ENCODE measurements at regions of chr6 and their contacts with region 1.

Region 1: DNA sequence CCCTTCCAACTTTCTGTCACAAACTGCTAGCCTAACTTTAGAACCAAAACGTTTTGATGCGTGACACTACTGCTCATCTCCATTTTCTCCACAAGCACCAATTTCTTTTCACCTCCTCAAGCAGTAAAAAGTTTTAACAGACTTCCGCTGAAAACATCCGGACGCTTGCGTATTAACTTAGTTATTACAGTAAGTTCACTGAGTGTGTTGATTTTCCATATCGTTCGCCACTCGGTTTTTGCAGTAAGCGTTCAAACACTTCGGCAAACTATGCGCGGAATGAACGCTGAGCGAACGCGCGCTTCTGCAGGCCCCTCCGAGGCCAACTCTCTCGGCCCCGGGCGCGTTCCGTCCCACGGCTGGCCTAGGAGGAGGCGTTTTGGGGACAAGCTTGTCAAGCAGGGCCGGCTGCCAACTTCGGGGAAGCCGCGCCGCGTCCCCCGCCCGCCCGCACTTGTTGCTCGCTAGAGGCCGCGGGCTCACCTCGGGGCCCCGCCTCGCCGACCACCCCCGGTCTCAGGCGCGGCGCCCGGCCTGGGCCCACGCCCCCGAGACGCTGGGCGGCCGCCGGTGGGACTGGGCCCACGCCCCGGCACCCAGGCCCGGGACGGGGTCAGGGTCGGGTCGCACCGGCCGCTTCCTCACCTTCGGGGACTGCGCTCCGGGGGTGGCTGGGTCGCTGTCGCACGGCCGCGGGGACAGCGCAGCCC is 945 bp downstream of the PHF10 start:
- DNase-seq: peak; percentile 74 to 79 (median 76)
- H3K4me3 ChIP-seq: peak overlapping the region; percentile 76 to 90
- H3K4me3 Mint-ChIP-seq: peak overlapping the region; percentile 89 to 100 (median 96)
- H3K27ac ChIP-seq: peak overlapping the region; percentile 85
- H3K27ac Mint-ChIP-seq: peak overlapping the region; percentile 93 to 99 (median 96)
- H3K4me1 ChIP-seq: peaks cover 49% of the 10 kb centered on the region
- H3K4me1 Mint-ChIP-seq: peaks cover 28 to 55% (median 42%) of the 10 kb centered on the region in 4 donors
- H3K27me3 ChIP-seq: no peaks in the 10 kb centered on the region
- H3K27me3 Mint-ChIP-seq: no peaks in the 10 kb centered on the region

Region 2: DNA sequence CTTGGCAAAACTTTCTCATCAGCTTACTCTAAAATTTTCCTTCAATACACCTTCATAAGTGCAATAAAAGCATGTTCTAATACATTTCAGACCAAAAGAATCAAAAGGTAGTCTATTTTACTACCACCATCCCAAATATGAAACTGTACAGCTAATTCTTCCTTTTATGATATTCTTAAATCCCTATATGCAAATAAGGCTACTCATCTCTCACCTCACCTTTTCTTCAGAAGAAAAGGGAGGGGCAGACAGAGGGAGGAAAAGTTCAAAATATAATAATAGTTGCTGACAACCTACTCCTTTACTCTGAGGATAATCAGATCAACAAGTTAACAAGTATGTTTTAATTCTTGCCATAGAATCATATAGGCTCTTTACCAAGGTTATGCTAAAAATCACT is 14.1 kb before region 1 on chr6:
- CTCF ChIA-PET with region 1: interaction called, 9 read pairs
- POLR2A ChIA-PET with region 1: interaction called, 279 read pairs
- intact Hi-C with region 1: no loop called
- DNase-seq: no peak
- H3K4me3 ChIP-seq: no peak overlapping the region
- H3K4me3 Mint-ChIP-seq: no peak overlapping the region
- H3K27ac ChIP-seq: no peak overlapping the region
- H3K27ac Mint-ChIP-seq: peak overlapping the region in 1 of 7 donors; percentile 24
- H3K4me1 ChIP-seq: peaks cover 20% of the 10 kb centered on the region
- H3K4me1 Mint-ChIP-seq: peaks cover 19 to 37% (median 23%) of the 10 kb centered on the region in 4 donors
- H3K27me3 ChIP-seq: no peaks in the 10 kb centered on the region
- H3K27me3 Mint-ChIP-seq: no peaks in the 10 kb centered on the region

Region 3: GRCh38 chr6:169751242-169752073 is 28.1 kb after region 1 on chr6 and contains the starts of genes DYNLT2 and ERMARD:
- CTCF ChIA-PET with region 1: interaction called, 5 read pairs
- POLR2A ChIA-PET with region 1: interaction called, 100 read pairs
- intact Hi-C with region 1: loop called (anchors 1 kb)
- DNase-seq: peak; percentile 93 to 96 (median 94)
- H3K4me3 ChIP-seq: peak within 1 kb of the TSS; percentile 80 to 90
- H3K4me3 Mint-ChIP-seq: peak within 1 kb of the TSS; percentile 97 to 100 (median 99)
- H3K27ac ChIP-seq: peak within 1 kb of the TSS; percentile 93
- H3K27ac Mint-ChIP-seq: peak within 1 kb of the TSS; percentile 99 to 100 (median 100)
- H3K4me1 ChIP-seq: peaks cover 24% of the 10 kb centered on the region
- H3K4me1 Mint-ChIP-seq: peaks cover 18 to 39% (median 31%) of the 10 kb centered on the region in 4 donors
- H3K27me3 ChIP-seq: no peaks in the 10 kb centered on the region
- H3K27me3 Mint-ChIP-seq: peaks cover 0 to 1% of the 10 kb centered on the region in 2 donors
- total RNA-seq, gene DYNLT2: 4.6 to 6.9 TPM
- total RNA-seq, gene ERMARD: 33.4 to 41.4 TPM